Activated CD8-positive, alpha-beta memory T cell treated with anti-CD3 and anti-CD28 coated beads, Interleukin-2, amount 10 ng/mL, durations not matched to agents 7 days and 5 days (primary cell): ENCODE measurements at regions of chr20 and their contacts with region 1.

Region 1: DNA sequence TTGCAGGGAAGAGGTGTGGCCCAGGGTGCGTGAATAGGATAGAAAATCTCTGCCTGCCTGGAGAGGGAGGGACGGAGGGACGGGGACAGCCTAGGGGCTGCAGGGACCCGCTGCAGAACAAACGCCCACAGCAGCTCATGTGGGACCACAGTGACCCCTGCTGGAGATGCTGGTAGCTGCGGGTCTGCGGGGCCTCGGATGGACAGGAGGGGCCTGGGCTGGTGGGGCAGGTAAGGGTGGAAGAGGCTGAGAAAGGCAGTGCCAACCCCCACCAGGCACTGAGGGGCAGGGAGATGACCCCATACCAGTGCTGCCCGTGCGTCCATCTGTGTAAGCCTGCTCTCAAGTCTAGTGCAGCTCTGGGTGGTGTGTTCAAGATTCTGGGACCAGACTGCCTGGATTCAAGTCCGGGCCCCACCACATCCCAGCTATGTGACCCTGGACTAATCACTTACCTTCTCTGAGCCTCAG is 39.4 kb downstream of the KIAA1755 start:
- DNase-seq: peak; percentile 74
- ATAC-seq: peak; percentile 81
- H3K4me3 Mint-ChIP-seq: no peak overlapping the region
- H3K27ac Mint-ChIP-seq: no peak overlapping the region
- H3K4me1 Mint-ChIP-seq: peaks cover 6% of the 10 kb centered on the region
- H3K27me3 Mint-ChIP-seq: peaks cover 8% of the 10 kb centered on the region

Region 2: GRCh38 chr20:38033310-38034107 is 187.6 kb before region 1 on chr20 and contains the starts of genes RPRD1B and TTI1:
- CTCF ChIA-PET with region 1: interaction called, 12 read pairs
- DNase-seq: peak; percentile 94
- ATAC-seq: peak; percentile 88
- H3K4me3 Mint-ChIP-seq: peak within 1 kb of the TSS; percentile 98
- H3K27ac Mint-ChIP-seq: peak within 1 kb of the TSS; percentile 99
- H3K4me1 Mint-ChIP-seq: peaks cover 59% of the 10 kb centered on the region
- H3K27me3 Mint-ChIP-seq: no peaks in the 10 kb centered on the region
- total RNA-seq, gene RPRD1B: 34.1 to 37.4 TPM
- total RNA-seq, gene TTI1: 34.7 to 35.0 TPM

Region 3: DNA sequence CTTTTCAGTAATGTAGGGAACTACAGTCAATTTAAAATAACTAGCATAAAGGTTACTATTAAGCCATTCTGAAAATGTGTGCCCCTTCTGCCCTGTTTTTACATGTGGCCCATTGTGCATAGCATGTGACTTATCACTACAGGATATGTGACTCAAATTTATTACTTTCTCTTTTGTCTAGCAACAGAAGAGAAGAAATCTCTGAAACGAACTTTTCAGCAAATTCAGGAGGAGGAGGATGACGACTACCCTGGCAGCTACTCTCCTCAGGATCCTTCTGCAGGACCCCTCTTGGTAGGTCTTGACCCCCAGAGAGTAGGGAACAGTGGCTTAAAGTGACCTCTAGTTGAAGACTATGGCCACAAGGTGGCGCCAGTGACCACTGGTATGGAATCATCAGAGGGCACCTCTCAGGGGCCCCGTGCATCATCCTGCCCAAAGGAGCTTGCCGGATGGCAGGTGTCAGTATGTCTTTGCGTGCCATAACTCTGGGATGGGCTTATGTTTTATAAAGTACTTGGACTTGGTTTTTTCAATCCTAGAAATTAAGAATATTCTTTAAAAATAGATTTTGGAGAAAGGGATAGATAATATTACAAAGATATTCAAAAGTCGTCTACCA is 163.7 kb before region 1 on chr20:
- CTCF ChIA-PET with region 1: interaction called, 80 read pairs
- DNase-seq: peak; percentile 82
- ATAC-seq: peak; percentile 88
- H3K4me3 Mint-ChIP-seq: no peak overlapping the region
- H3K27ac Mint-ChIP-seq: peak overlapping the region; percentile 44
- H3K4me1 Mint-ChIP-seq: peaks cover 24% of the 10 kb centered on the region
- H3K27me3 Mint-ChIP-seq: no peaks in the 10 kb centered on the region

Region 4: DNA sequence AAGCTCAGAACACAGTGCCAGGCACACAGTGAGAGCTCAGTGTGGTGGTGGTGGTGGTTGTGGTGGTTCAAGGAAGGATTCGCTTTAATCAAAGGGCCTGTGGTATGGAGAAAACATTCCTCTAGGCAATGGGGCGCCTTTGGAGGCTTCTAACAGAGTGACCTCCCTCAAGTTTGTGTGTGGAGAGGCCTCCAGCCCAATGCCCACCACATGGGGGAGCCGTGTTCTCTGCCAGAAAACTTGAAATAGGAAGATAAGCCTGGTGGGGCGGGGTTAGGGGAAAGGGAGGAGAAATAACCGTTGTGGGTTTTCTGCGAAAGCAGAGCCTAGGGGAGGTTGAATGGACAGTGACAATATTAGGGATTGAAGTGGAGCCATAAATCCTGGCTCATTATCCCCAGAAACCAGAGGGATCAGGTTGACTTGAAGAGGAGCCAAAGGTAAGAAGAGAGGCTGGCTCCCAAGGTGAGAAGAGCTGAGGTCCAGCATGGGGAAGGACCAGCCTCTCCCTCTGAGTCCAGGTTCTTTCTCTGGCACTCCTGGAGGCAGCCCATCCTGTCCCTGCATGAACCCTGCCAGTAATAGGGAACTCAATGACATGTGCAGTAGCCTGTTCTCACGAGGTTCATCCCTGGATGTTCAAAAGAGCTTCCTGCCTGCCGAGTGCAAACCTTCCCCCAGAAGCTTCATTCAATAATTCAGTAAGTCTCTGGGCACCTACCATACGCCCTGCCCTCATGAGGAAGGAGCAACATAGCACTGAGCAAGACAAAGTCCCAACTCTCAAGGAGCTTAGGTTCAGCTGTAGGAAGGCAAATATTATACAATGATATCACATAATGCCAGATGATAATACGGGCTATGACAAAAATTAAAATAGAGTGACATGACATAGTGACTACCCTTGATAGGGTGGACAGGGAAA is 107.5 kb before region 1 on chr20:
- CTCF ChIA-PET with region 1: interaction called, 38 read pairs
- DNase-seq: peak; percentile 69
- ATAC-seq: peak; percentile 57
- H3K4me3 Mint-ChIP-seq: no peak overlapping the region
- H3K27ac Mint-ChIP-seq: peak overlapping the region; percentile 12
- H3K4me1 Mint-ChIP-seq: peaks cover 10% of the 10 kb centered on the region
- H3K27me3 Mint-ChIP-seq: peaks cover 20% of the 10 kb centered on the region

Region 5: DNA sequence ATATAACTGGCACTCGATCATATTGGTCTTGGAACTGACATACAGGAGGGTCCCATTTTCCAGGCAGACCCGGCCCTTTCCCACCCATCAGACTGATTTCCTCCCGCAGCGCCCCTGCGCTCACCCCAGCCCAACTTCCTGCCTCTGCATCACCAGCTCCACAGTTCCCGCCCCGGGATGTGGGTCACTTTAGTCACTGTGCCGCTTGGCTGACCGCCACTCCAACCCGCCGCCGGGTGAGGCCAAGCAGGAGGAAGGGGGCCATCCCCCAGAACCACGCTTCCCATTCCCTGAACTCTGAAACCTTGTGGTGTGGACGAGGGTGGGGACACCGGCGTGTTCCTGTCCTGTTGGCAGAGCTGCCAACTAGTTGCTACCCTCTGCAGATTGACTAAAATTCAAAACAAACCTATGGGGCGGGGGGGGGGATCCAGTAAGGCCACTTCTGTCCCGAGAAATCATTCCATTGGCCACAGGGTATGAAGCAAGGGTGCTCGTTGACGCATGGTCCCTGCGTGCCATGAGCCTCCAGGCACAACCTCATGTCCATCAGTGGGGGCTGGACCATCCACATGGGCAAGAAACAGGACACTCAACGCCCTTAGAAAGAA is 68.4 kb before region 1 on chr20:
- CTCF ChIA-PET with region 1: no interaction called
- DNase-seq: peak; percentile 78
- ATAC-seq: peak; percentile 84
- H3K4me3 Mint-ChIP-seq: peak overlapping the region; percentile 49
- H3K27ac Mint-ChIP-seq: peak overlapping the region; percentile 79
- H3K4me1 Mint-ChIP-seq: peaks cover 23% of the 10 kb centered on the region
- H3K27me3 Mint-ChIP-seq: peaks cover 2% of the 10 kb centered on the region

Region 6: DNA sequence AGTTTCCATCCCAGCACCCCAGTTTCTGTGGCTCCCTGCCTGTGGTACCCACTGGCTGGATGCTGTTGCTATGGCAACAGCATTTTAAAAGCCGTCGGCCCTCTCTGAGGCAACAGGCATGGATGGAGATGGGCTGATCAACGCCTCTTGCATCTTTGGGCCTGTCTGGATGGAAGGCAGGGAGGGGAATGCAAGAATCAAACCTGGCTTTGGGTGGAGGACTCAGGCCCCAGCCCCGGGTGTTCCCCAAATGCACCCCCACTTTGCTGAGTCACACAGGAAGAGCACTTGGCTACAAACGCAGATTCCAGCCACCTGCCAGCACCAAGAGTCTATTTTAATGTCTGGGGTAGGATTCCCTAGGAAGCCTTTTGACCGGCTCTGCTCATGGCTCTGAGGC is 10.4 kb before region 1 on chr20:
- CTCF ChIA-PET with region 1: interaction called, 22 read pairs
- DNase-seq: no peak
- ATAC-seq: no peak
- H3K4me3 Mint-ChIP-seq: no peak overlapping the region
- H3K27ac Mint-ChIP-seq: no peak overlapping the region
- H3K4me1 Mint-ChIP-seq: no peaks in the 10 kb centered on the region
- H3K27me3 Mint-ChIP-seq: peaks cover 14% of the 10 kb centered on the region